ENCODE measurements at regions of chr2 and their contacts with region 1.

Region 1: GRCh38 chr2:85561317-85561979 is at the start of gene GGCX:
- DNase-seq: peak; percentile 86 to 95 (median 87)
- H3K4me3 ChIP-seq: peak within 1 kb of the TSS; percentile 74 to 97
- H3K4me3 Mint-ChIP-seq: peak within 1 kb of the TSS; percentile 94 to 99 (median 98)
- H3K27ac ChIP-seq: peak within 1 kb of the TSS; percentile 89
- H3K27ac Mint-ChIP-seq: peak within 1 kb of the TSS; percentile 94 to 99 (median 97)
- H3K4me1 ChIP-seq: peaks cover 19% of the 10 kb centered on the region
- H3K4me1 Mint-ChIP-seq: peaks cover 12 to 35% (median 22%) of the 10 kb centered on the region in 4 donors
- H3K27me3 ChIP-seq: no peaks in the 10 kb centered on the region
- H3K27me3 Mint-ChIP-seq: no peaks in the 10 kb centered on the region
- total RNA-seq, gene GGCX: 28.5 to 38.1 TPM

Region 2: GRCh38 chr2:85577386-85578242 is 16.2 kb after region 1 on chr2 and contains the start of gene VAMP8:
- CTCF ChIA-PET with region 1: interaction called, 7 read pairs
- POLR2A ChIA-PET with region 1: interaction called, 17 read pairs
- intact Hi-C with region 1: loop called (anchors 1 kb)
- DNase-seq: peak; percentile 48 to 75 (median 57)
- H3K4me3 ChIP-seq: peak within 1 kb of the TSS; percentile 62 to 86
- H3K4me3 Mint-ChIP-seq: peak within 1 kb of the TSS; percentile 90 to 98 (median 96)
- H3K27ac ChIP-seq: peak within 1 kb of the TSS; percentile 76
- H3K27ac Mint-ChIP-seq: peak within 1 kb of the TSS; percentile 86 to 98 (median 93)
- H3K4me1 ChIP-seq: peaks cover 30% of the 10 kb centered on the region
- H3K4me1 Mint-ChIP-seq: peaks cover 20 to 48% (median 36%) of the 10 kb centered on the region in 4 donors
- H3K27me3 ChIP-seq: no peaks in the 10 kb centered on the region
- H3K27me3 Mint-ChIP-seq: no peaks in the 10 kb centered on the region
- total RNA-seq, gene VAMP8: 98.5 to 107 TPM

Region 3: DNA sequence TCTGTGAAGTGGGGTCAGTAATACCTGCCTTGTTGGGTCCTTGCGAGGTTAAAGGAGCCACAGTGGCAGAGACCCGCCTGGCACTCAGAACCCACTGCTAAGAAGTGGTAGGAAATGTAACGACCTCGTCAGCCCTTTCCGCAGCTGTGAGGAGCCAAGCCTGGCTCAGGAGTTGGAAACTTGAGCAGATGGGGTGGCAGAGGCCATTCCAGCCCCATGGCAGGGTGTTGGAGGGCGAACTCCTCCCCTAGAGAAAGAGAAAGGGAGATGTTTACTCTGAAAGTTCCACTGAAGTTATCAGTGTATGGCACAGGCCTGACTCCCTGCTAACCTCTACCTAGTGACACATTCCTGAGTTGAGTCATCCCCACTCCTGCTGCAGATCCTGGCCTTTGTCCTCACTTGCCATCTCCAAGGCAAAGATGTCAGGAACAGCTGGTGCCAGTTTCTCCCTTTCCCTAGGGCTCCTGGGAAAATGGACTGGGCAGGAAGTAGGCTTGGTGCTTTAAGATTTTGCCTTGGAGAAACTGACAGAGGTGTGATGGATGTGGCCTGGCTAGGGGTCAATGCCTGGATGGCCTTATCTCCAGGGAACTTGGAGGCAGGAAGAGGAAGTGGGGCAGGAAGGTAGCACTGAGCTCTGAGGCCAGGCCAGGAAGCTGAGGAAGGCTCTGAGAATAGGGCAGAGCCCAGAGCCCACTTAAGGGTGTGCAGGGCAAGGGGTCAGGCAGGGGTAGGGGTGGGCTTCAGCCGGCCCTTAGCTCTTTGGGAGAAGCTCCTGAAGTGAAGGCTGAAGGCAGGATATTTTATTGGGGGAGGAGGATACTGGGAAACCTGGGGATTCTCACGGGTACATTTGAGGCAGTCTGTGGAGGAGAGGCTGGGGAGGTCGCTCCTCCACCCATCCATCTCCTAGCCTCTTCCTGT is 23.7 kb after region 1 on chr2:
- CTCF ChIA-PET with region 1: no interaction called
- POLR2A ChIA-PET with region 1: interaction called, 16 read pairs
- intact Hi-C with region 1: loop called (anchors 1 kb)
- DNase-seq: peak in 3 of 5 donors; percentile 24 to 32 (median 24)
- H3K4me3 ChIP-seq: peak overlapping the region; percentile 57 to 64
- H3K4me3 Mint-ChIP-seq: peak overlapping the region; percentile 88 to 98 (median 90)
- H3K27ac ChIP-seq: peak overlapping the region; percentile 80
- H3K27ac Mint-ChIP-seq: peak overlapping the region; percentile 85 to 94 (median 92)
- H3K4me1 ChIP-seq: peaks cover 41% of the 10 kb centered on the region
- H3K4me1 Mint-ChIP-seq: peaks cover 38 to 68% (median 52%) of the 10 kb centered on the region in 4 donors
- H3K27me3 ChIP-seq: no peaks in the 10 kb centered on the region
- H3K27me3 Mint-ChIP-seq: no peaks in the 10 kb centered on the region

Region 4: GRCh38 chr2:85602476-85603234 is 41.2 kb after region 1 on chr2 and contains the start of gene TMEM150A:
- CTCF ChIA-PET with region 1: interaction called, 4 read pairs
- POLR2A ChIA-PET with region 1: interaction called, 30 read pairs
- intact Hi-C with region 1: loop called (anchors 1 kb)
- DNase-seq: peak; percentile 81 to 85 (median 82)
- H3K4me3 ChIP-seq: peak within 1 kb of the TSS; percentile 66 to 95
- H3K4me3 Mint-ChIP-seq: peak within 1 kb of the TSS; percentile 88 to 94 (median 90)
- H3K27ac ChIP-seq: peak within 1 kb of the TSS; percentile 62
- H3K27ac Mint-ChIP-seq: peak within 1 kb of the TSS; percentile 82 to 96 (median 90)
- H3K4me1 ChIP-seq: peaks cover 28% of the 10 kb centered on the region
- H3K4me1 Mint-ChIP-seq: peaks cover 14 to 49% (median 34%) of the 10 kb centered on the region in 4 donors
- H3K27me3 ChIP-seq: no peaks in the 10 kb centered on the region
- H3K27me3 Mint-ChIP-seq: no peaks in the 10 kb centered on the region
- total RNA-seq, gene TMEM150A: 13.3 to 14.3 TPM

Region 5: DNA sequence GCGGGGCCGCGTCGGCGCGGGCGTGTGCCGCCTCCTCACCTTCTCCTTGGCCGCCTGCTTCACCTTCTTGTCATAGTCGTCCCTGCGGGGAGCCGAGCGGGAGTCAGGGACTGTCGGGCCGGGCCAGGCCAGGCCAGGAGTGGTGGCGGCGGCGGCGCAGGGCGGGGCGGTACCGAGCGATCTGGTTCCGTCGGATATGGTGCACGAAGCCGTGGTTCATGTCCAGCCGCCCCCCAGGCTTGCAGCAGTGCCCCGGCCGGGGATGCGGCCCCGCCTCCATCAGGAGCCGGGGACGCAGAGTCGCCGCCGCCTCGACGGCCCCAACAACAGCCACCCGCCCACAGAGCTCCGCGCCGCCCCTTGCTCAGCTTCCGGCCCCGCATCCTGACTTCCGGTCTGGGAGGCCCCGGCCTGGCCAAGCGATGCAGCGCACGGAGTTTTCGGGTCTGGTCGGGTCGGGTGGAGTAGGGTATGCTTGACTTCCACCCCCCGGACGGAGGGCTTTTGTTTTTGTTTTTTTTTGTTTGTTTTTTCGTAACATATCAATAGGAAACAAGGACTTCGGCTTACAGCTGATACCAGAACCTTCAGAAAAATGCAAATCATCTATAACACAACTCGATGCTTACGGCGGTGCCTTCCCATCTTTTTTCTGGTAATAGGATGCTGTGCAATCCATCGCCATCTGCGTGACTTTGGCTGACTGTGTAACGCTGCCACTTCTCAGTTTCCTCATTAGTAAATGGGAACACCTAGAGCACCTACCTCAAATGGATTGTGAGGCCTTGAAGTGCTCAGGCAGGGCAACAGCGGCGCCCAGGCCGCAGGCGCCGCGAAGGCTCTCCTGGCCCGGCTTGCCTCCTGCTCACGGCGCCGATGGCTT is 50.5 kb after region 1 on chr2 and contains the start of gene C2orf68:
- CTCF ChIA-PET with region 1: interaction called, 3 read pairs
- POLR2A ChIA-PET with region 1: interaction called, 8 read pairs
- intact Hi-C with region 1: loop called (anchors 1 kb)
- DNase-seq: peak; percentile 77 to 86 (median 77)
- H3K4me3 ChIP-seq: peak within 1 kb of the TSS; percentile 57 to 86
- H3K4me3 Mint-ChIP-seq: peak within 1 kb of the TSS; percentile 96 to 100 (median 98)
- H3K27ac ChIP-seq: peak within 1 kb of the TSS; percentile 72
- H3K27ac Mint-ChIP-seq: peak within 1 kb of the TSS; percentile 94 to 97 (median 97)
- H3K4me1 ChIP-seq: peaks cover 30% of the 10 kb centered on the region
- H3K4me1 Mint-ChIP-seq: peaks cover 13 to 41% (median 25%) of the 10 kb centered on the region in 4 donors
- H3K27me3 ChIP-seq: no peaks in the 10 kb centered on the region
- H3K27me3 Mint-ChIP-seq: no peaks in the 10 kb centered on the region
- total RNA-seq, gene C2orf68: 87.3 to 89.9 TPM

Measured in CD4-positive, alpha-beta memory T cell (primary cell).